ENCODE measurements at regions of chr1 and their contacts with region 1.

Region 1: GRCh38 chr1:173590557-173590956 is 12.3 kb downstream of the SLC9C2 start:
- DNase-seq: no peak
- H3K4me3 ChIP-seq: no peak overlapping the region
- H3K27ac ChIP-seq: no peak overlapping the region
- H3K4me1 ChIP-seq: no peaks in the 10 kb centered on the region
- H3K27me3 ChIP-seq: no peaks in the 10 kb centered on the region
- CTCF ChIP-seq: no peak

Region 2: DNA sequence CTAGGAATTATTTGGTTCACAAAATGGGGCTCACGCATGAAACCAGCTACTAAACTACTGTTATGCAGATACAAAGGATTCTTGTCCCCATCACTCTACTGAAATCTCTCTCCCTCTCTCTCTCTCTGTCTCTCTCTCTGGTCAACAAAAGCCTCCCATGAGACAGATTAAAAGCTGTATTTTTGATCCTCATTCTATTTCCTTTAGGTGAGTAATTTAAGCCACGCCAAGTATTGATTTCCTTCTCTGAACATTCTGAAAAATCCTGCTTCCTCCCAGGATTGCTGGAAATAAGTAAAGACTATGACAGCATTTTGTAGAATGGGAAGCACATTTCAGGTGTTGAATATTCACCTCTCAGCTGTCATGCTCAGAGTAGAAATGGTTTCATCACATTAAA is 69.8 kb before region 1 on chr1:
- intact Hi-C with region 1: no loop called
- DNase-seq: no peak
- H3K4me3 ChIP-seq: no peak overlapping the region
- H3K27ac ChIP-seq: no peak overlapping the region
- H3K4me1 ChIP-seq: no peaks in the 10 kb centered on the region
- H3K27me3 ChIP-seq: no peaks in the 10 kb centered on the region
- CTCF ChIP-seq: no peak

Region 3: DNA sequence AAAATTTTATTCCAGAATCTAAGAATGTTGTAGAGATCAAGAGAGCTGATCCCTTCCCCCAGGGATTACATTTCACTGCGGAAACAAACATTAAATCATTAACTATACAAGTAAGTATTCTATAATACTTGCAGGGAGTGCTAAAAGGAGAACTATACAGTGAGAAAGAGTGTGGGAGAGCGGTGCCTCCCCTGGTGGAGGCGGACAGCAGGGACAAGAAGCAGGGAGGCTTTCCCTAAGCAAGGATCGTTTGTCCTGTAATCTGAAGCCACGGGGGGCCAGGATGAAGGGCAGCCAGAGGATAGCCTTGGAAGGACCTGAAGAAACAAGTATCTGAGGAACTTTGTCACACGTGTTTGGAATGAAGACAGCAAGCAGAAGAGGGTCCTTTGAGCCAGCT is 27.7 kb before region 1 on chr1:
- intact Hi-C with region 1: loop called (anchors 2 kb)
- DNase-seq: no peak
- H3K4me3 ChIP-seq: no peak overlapping the region
- H3K27ac ChIP-seq: no peak overlapping the region
- H3K4me1 ChIP-seq: no peaks in the 10 kb centered on the region
- H3K27me3 ChIP-seq: no peaks in the 10 kb centered on the region
- CTCF ChIP-seq: no peak

Measured in left ventricle myocardium inferior (tissue), 1 donor.